Colonic mucosa (tissue), 4 donors: ENCODE measurements at regions of chr10 and their contacts with region 1.

Region 1: GRCh38 chr10:32256613-32257437 is 90.1 kb downstream of the EPC1 start:
- DNase-seq: peak; percentile 73
- H3K4me3 ChIP-seq: no peak overlapping the region
- H3K27ac ChIP-seq: no peak overlapping the region
- H3K4me1 ChIP-seq: no peaks in the 10 kb centered on the region
- H3K27me3 ChIP-seq: no peaks in the 10 kb centered on the region
- CTCF ChIP-seq: peak; percentile 82

Region 2: DNA sequence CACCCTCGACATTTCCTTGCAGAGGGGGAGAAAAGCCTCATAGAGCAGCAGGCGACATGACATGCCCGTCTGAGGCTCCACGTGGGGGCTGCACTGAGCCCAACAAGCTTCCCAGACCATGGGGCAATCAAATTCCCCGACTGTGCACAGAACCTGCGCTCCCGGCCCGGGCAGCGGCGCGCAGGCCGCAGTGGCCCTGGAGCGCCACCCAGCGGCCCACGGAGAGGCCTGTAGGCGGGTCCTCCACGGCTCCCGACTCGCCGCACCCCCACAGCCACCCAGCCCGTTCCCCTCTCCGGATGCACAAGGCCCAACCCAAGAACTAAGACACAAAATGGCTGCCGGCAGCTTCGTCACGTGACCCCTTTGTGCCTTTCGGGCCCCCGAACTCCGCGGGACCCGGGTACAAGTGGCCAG is 89.3 kb after region 1 on chr10:
- intact Hi-C with region 1: loop called (anchors 5 kb)
- DNase-seq: peak; percentile 96
- H3K4me3 ChIP-seq: peak overlapping the region; percentile 84
- H3K27ac ChIP-seq: peak overlapping the region; percentile 100
- H3K4me1 ChIP-seq: peaks cover 10% of the 10 kb centered on the region
- H3K27me3 ChIP-seq: no peaks in the 10 kb centered on the region
- CTCF ChIP-seq: peak; percentile 95